Left colon (tissue), 2 donors: ENCODE measurements at regions of chr20 and their contacts with region 1.

Region 1: GRCh38 chr20:2210646-2211552 is 84.9 kb upstream of the TGM3 start:
- DNase-seq: peak; percentile 33 to 44
- ATAC-seq: peak; percentile 71

Region 2: DNA sequence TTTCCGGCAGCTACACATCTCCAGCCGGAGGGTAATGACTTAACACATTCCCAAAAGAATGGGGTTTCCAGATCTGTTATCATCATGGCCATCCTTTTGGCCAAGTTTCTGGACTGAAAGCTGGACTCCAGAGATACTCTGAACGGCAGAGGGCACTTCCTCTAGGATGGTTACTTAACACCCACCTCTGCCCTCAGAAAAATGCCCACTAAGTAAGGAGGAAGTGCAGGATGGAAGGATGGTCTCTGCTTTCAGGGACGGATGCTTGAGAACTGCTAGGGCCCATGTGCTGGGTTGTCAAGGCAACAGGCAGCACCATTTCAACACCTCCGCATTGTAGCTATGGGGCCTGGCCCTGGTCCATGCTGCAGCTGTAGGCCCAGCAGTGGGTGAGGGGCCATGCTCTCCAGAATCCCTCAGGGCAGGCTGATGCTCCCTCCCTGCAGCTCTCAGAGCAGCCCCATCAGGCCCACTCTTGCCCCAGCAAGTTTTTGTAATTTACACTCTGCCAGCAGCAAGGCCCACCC is 68.4 kb after region 1 on chr20:
- intact Hi-C with region 1: loop called in 1 of 2 experiments (anchors 10 kb)
- DNase-seq: no peak
- ATAC-seq: no peak

Region 3: GRCh38 chr20:2446845-2447244 is 235.9 kb after region 1 on chr20:
- intact Hi-C with region 1: loop called in 1 of 2 experiments (anchors 10 kb)
- DNase-seq: no peak
- ATAC-seq: no peak